K562 (cell line): ENCODE measurements at regions of chr22 and their contacts with region 1.

Region 1: DNA sequence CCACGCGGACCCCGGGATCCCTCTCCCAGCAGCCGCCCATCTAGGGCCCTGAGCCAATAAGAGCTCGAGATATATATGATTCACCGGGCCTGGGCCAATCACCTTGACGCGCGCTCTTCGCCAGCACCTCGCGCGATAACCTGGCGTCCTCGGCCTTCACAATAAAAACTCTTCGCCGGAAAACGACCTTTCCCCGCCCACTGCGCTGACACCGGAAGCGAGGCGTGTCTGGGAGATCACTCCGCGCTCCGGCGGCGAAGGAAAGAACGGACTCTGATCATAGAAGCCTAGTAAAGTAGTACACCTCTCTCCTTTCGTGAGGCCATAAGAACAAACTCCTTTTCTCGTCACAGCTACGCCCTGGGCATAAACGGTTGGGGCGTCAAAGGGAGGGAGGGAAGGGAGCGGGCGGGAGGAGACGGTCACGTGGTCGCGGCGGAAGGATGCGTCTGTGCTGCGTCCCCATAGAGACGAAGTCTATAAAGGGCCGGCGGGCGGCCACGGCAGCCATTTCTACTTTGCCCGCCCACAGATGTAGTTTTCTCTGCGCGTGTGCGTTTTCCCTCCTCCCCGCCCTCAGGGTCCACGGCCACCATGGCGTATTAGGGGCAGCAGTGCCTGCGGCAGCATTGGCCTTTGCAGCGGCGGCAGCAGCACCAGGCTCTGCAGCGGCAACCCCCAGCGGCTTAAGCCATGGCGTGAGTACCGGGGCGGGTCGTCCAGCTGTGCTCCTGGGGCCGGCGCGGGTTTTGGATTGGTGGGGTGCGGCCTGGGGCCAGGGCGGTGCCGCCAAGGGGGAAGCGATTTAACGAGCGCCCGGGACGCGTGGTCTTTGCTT is at the start of gene ATF4:
- DNase-seq: peak; percentile 88 to 97 (median 92)
- ATAC-seq: peak; percentile 87
- H3K4me3 ChIP-seq: peak within 1 kb of the TSS; percentile 99
- H3K27ac ChIP-seq: peak within 1 kb of the TSS; percentile 100
- H3K4me1 ChIP-seq: peaks cover 23 to 34% of the 10 kb centered on the region in 2 experiments; a peak in 4 of 5 replicates
- H3K27me3 ChIP-seq: no peaks in the 10 kb centered on the region
- CTCF ChIP-seq: no peak
- EP300 ChIP-seq: no peak; the same call in 1 of the 2 replicates
- POLR2A ChIP-seq: peak; percentile 99
- RAD21 ChIP-seq: no peak; a peak in 1 of 4 replicates
- polyA plus RNA-seq, gene ATF4: 93.1 to 125 TPM

Region 2: DNA sequence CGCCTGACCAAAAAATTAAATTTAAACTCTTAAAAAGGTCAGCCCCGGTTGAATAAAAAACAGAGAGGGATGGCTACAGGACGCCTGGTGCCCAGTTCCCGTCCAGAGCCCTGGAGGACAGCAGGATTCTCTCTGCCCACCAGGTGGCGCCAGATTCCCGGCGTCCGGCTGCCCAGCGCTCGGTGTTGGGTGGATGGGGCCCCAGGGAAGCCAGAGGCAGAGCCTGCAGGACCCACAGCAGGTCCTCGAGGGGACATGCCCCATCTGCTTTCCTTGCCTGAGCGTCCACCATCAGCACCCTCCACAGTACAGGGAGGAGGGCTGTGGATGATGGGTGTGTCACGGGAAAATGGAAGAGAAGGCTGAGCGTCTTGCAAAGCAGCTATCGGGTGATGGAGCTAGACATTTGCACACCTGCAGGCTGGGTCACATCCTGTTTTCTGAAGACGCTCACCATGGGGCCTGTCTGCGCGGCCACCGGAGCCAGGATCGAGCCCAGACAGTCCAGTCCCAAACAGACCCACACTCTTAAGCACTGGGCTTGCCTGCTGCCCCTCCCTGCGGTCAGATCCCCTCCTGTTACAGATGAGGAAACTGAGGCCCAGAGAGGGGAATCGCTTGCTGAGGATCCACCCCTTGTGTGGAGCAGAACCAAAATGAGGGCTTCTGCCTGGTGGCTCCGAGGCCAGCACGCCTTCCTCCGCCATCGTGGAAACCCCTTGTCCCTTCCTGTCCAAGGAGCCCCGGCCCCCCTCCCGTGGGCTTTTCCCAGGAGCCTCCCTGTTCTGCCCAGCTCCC is 349.2 kb before region 1 on chr22:
- CTCF ChIA-PET with region 1: no interaction called
- POLR2A ChIA-PET with region 1: no interaction called
- in situ Hi-C with region 1: no loop called
- intact Hi-C with region 1: loop called (anchors 10 kb)
- DNase-seq: peak; percentile 71 to 79 (median 76)
- ATAC-seq: peak; percentile 98
- H3K4me3 ChIP-seq: no peak overlapping the region
- H3K27ac ChIP-seq: no peak overlapping the region
- H3K4me1 ChIP-seq: peaks cover 12 to 23% of the 10 kb centered on the region in 2 experiments; a peak in 4 of 5 replicates
- H3K27me3 ChIP-seq: no peaks in the 10 kb centered on the region
- CTCF ChIP-seq: peak; percentile 80 to 93 (median 87)
- EP300 ChIP-seq: no peak
- POLR2A ChIP-seq: no peak
- RAD21 ChIP-seq: peak; percentile 88 to 96

Region 3: DNA sequence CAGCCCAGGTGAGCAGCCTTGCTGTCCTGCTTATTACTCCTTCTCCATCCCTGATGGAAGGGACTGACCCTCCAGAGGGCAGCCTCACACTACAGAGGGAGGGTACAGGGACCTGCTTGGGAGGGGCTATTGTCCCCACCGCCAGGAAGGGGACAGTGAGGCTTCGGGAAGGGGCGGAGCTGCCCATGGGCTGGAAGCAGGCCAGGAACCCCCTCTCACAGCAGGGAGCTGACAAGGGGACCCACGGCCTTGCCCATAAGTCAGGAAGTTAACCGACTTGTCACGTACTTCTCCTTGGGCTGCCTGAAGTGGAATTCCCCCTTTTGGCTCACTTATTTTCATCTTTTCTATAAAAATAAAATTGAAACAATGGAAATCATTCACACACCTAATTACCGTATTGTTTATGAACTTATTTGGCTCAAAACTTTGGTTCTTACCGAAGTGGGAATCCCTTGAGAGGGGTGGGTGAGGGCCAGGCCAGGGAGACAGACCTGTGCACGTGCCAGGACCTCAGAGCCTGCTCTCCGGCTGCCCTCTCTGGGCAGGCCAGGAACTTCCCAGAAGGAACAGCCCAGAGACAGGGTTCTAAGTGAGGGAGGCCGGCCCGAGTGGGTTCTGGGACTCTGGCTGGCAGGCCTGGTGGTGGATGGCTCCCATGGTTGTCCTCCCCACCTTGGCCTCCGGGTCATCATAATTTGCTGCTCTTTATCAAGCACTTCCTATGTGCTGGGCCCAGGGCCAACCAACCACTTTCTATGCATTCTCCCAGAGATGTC is 57.6 kb before region 1 on chr22:
- CTCF ChIA-PET with region 1: no interaction called
- POLR2A ChIA-PET with region 1: interaction called, 6 read pairs
- in situ Hi-C with region 1: no loop called
- intact Hi-C with region 1: loop called (anchors 5 kb)
- DNase-seq: peak; percentile 52 to 83 (median 67)
- ATAC-seq: peak; percentile 67
- H3K4me3 ChIP-seq: no peak overlapping the region
- H3K27ac ChIP-seq: peak overlapping the region; percentile 63
- H3K4me1 ChIP-seq: peaks cover 47 to 78% of the 10 kb centered on the region in 2 experiments
- H3K27me3 ChIP-seq: no peaks in the 10 kb centered on the region
- CTCF ChIP-seq: peak; percentile 44 to 58 (median 53); a peak in 5 of 6 replicates
- EP300 ChIP-seq: no peak
- POLR2A ChIP-seq: no peak
- RAD21 ChIP-seq: peak; percentile 41 to 66; a peak in 3 of 4 replicates

Region 4: GRCh38 chr22:39490135-39490798 is 30.0 kb before region 1 on chr22:
- CTCF ChIA-PET with region 1: interaction called, 8 read pairs
- POLR2A ChIA-PET with region 1: interaction called, 12 read pairs
- in situ Hi-C with region 1: no loop called
- intact Hi-C with region 1: no loop called
- DNase-seq: peak; percentile 82 to 90 (median 84)
- ATAC-seq: peak; percentile 95
- H3K4me3 ChIP-seq: no peak overlapping the region
- H3K27ac ChIP-seq: no peak overlapping the region; the same call in 2 of the 3 replicates
- H3K4me1 ChIP-seq: peaks cover 37 to 49% of the 10 kb centered on the region in 2 experiments
- H3K27me3 ChIP-seq: no peaks in the 10 kb centered on the region
- CTCF ChIP-seq: no peak
- EP300 ChIP-seq: no peak
- POLR2A ChIP-seq: no peak
- RAD21 ChIP-seq: no peak

Region 5: GRCh38 chr22:39502109-39502788 is 18.0 kb before region 1 on chr22 and contains the start of gene MIEF1:
- CTCF ChIA-PET with region 1: interaction called, 3 read pairs
- POLR2A ChIA-PET with region 1: interaction called, 106 read pairs
- in situ Hi-C with region 1: no loop called
- intact Hi-C with region 1: loop called (anchors 2 kb)
- DNase-seq: peak; percentile 88 to 97 (median 90)
- ATAC-seq: peak; percentile 95
- H3K4me3 ChIP-seq: peak within 1 kb of the TSS; percentile 96
- H3K27ac ChIP-seq: peak within 1 kb of the TSS; percentile 84
- H3K4me1 ChIP-seq: peaks cover 22 to 29% of the 10 kb centered on the region in 2 experiments
- H3K27me3 ChIP-seq: no peaks in the 10 kb centered on the region
- CTCF ChIP-seq: no peak
- EP300 ChIP-seq: no peak
- POLR2A ChIP-seq: peak; percentile 73
- RAD21 ChIP-seq: no peak
- polyA plus RNA-seq, gene MIEF1: 10.9 to 13.1 TPM

Region 6: GRCh38 chr22:40044102-40044869 is 524.0 kb after region 1 on chr22:
- CTCF ChIA-PET with region 1: no interaction called
- POLR2A ChIA-PET with region 1: interaction called, 13 read pairs
- in situ Hi-C with region 1: no loop called
- intact Hi-C with region 1: no loop called
- DNase-seq: peak; percentile 96 to 99 (median 96)
- ATAC-seq: peak; percentile 95
- H3K4me3 ChIP-seq: peak overlapping the region; percentile 52
- H3K27ac ChIP-seq: peak overlapping the region; percentile 94
- H3K4me1 ChIP-seq: peaks cover 12 to 46% of the 10 kb centered on the region in 2 experiments
- H3K27me3 ChIP-seq: no peaks in the 10 kb centered on the region
- CTCF ChIP-seq: no peak
- EP300 ChIP-seq: peak; percentile 6; the same call in 1 of the 2 replicates
- POLR2A ChIP-seq: peak; percentile 92
- RAD21 ChIP-seq: no peak